SK-N-SH (cell line): ENCODE measurements at regions of chr17 and their contacts with region 1.

Region 1: DNA sequence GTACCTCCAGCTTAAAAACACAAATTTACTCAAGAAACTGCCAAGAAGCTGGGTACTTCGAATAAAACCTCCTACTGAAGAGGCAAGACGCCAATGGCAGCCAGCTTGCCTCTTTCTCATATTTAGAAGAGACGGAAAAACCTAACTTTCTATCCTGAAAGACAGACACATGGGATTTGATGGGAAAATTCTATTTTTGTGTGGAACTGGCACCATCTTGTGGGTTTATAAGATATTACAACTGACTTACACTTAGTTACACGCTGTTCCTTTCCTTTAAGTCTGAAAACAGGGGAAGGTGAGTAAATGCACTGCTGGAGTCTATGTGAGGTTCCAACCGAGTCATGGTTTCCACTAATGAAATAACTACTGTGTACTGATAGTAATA is 10.3 kb downstream of the ZNF18 start:
- DNase-seq: peak; percentile 41
- H3K4me3 ChIP-seq: no peak overlapping the region
- H3K27ac ChIP-seq: no peak overlapping the region
- H3K4me1 ChIP-seq: no peaks in the 10 kb centered on the region
- H3K27me3 ChIP-seq: no peaks in the 10 kb centered on the region
- CTCF ChIP-seq: peak; percentile 66
- EP300 ChIP-seq: no peak
- RAD21 ChIP-seq: peak; percentile 74

Region 2: DNA sequence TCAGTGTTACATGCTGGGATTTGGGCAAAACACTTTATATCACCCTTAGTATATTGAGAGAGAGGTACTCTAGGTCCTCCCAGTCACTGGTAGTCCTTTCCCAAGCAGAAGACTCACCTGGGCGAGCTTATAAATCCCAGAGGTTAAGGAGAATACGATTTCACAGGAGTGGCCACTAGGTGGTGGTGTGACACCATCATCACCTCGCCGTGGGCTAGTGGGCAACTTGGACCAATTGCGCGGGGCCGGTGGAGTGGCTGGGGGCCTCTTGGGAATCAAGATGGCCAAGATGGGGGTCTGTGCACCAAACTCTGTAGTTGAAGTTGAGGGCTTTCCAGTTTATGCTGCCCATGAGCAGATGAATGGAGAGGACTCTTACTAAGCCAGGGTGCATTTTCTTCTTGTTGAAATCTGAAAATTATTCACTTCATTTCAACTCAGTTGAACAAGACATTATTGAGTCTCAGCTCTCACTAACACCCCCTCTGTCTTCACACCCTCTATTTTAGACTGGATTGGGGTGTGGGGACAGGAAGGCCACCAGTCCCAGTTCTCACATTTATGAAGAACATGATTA is 1110.9 kb before region 1 on chr17:
- CTCF ChIA-PET with region 1: interaction called, 16 read pairs
- POLR2A ChIA-PET with region 1: no interaction called
- DNase-seq: peak; percentile 58
- H3K4me3 ChIP-seq: no peak overlapping the region; a peak in 1 of 4 replicates
- H3K27ac ChIP-seq: no peak overlapping the region
- H3K4me1 ChIP-seq: no peaks in the 10 kb centered on the region
- H3K27me3 ChIP-seq: no peaks in the 10 kb centered on the region
- CTCF ChIP-seq: peak; percentile 55
- EP300 ChIP-seq: no peak
- RAD21 ChIP-seq: peak; percentile 77

Region 3: GRCh38 chr17:11814655-11815262 is 172.2 kb before region 1 on chr17:
- CTCF ChIA-PET with region 1: no interaction called
- POLR2A ChIA-PET with region 1: no interaction called
- DNase-seq: no peak
- H3K4me3 ChIP-seq: no peak overlapping the region
- H3K27ac ChIP-seq: no peak overlapping the region
- H3K4me1 ChIP-seq: no peaks in the 10 kb centered on the region
- H3K27me3 ChIP-seq: no peaks in the 10 kb centered on the region
- CTCF ChIP-seq: no peak
- EP300 ChIP-seq: no peak
- RAD21 ChIP-seq: no peak

Region 4: DNA sequence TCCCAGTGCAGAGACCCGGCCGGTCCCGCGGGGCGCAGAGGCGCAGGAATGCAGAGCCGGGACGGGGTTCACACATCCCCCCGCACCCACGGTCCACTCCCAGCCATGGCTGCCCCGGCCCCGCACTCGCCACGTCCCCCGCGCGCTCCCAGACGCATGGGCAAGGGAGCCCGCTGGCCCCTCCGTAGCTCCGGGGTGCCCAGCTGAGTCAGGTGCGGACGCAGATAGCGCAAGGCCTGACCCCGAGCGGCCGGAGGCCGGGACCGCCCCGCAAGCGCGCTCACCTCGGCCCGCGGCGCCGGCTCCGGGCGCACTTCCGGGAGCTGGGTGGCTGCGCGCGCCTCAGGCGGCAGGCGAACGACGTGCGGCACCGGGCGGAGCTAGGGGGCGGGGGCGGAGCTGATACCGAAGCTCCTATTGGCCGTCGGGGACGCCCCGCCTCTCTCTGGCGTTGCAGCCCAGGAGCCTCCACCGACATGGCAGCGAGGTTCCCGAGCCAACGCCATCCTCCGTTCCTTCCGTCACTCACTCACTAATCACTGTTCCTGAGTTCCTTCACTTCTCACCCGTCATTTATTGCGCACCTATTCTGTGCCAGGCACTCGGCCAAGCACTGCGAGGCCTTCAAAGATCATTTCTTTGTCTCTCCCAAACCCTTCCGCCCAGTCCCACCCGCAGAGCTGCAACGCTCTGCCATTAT is 10.4 kb after region 1 on chr17 and contains the start of gene ZNF18:
- CTCF ChIA-PET with region 1: interaction called, 22 read pairs
- POLR2A ChIA-PET with region 1: no interaction called
- DNase-seq: peak; percentile 97
- H3K4me3 ChIP-seq: peak within 1 kb of the TSS; percentile 90 to 91
- H3K27ac ChIP-seq: peak within 1 kb of the TSS; percentile 87 to 90
- H3K4me1 ChIP-seq: peaks cover 5 to 8% of the 10 kb centered on the region in 2 experiments; a peak in 2 of 4 replicates
- H3K27me3 ChIP-seq: no peaks in the 10 kb centered on the region
- CTCF ChIP-seq: no peak
- EP300 ChIP-seq: no peak; a peak in 1 of 4 replicates
- RAD21 ChIP-seq: no peak
- polyA plus RNA-seq, gene ZNF18: 3.2 and 5.5 TPM in 2 replicates